PC-9 (cell line): ENCODE measurements at regions of chr9 and their contacts with region 1.

Region 1: GRCh38 chr9:127980706-127981558 is at the start of gene EEIG1:
- DNase-seq: peak; percentile 73 to 99
- H3K4me3 ChIP-seq: peak within 1 kb of the TSS; percentile 82
- H3K27ac ChIP-seq: peak within 1 kb of the TSS; percentile 39
- H3K4me1 ChIP-seq: peaks cover 45% of the 10 kb centered on the region
- H3K27me3 ChIP-seq: no peaks in the 10 kb centered on the region
- CTCF ChIP-seq: no peak
- total RNA-seq, gene EEIG1: 176 and 208 TPM in 2 replicates

Region 2: GRCh38 chr9:127943731-127944144 is 37.2 kb before region 1 on chr9:
- CTCF ChIA-PET with region 1: interaction called, 4 read pairs
- POLR2A ChIA-PET with region 1: no interaction called
- intact Hi-C with region 1: loop called (anchors 1 kb)
- DNase-seq: peak; percentile 61 to 80
- H3K4me3 ChIP-seq: no peak overlapping the region
- H3K27ac ChIP-seq: no peak overlapping the region
- H3K4me1 ChIP-seq: no peaks in the 10 kb centered on the region
- H3K27me3 ChIP-seq: no peaks in the 10 kb centered on the region
- CTCF ChIP-seq: peak; percentile 88

Region 3: DNA sequence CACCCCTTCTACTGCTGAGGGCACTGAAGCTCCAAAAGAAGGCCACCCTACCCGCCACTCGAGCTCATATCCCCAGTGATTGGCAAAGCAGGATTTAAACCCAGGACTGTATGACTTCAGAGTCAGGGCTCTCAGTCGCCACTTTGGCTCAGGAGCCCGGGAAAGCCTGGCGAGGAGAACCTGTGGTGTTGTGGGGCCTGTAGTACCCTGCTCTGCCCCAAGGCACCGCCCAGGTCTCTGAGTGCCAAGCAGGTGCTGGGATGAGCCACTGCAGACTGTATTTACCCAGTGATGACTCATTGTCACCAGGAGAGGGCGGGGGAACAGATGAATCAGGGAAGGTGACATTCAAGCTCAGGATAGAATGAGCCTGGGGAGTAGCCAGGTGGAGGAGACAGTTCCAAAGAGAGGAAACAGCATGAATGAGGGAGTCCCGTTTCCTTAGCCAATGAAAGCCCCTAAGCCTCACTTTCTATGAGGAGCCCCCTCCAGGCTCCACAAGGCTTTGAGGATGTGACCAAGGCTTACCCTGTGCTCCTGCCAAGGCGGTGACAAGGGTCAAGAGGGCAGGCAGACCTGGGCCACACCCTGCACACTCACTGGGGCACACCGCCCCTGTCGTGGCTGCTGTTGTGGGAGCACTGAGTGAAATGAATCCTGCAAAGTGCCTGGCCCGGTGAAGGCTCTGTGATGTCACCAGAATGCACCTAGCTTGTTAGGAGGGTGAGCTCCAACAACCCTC is 25.5 kb before region 1 on chr9:
- CTCF ChIA-PET with region 1: interaction called, 3 read pairs
- POLR2A ChIA-PET with region 1: interaction called, 5 read pairs
- intact Hi-C with region 1: loop called (anchors 1 kb)
- DNase-seq: peak; percentile 96 to 97
- H3K4me3 ChIP-seq: peak overlapping the region; percentile 10; the same call in 1 of the 2 replicates
- H3K27ac ChIP-seq: peak overlapping the region; percentile 82
- H3K4me1 ChIP-seq: peaks cover 60% of the 10 kb centered on the region
- H3K27me3 ChIP-seq: no peaks in the 10 kb centered on the region
- CTCF ChIP-seq: peak; percentile 68

Region 4: DNA sequence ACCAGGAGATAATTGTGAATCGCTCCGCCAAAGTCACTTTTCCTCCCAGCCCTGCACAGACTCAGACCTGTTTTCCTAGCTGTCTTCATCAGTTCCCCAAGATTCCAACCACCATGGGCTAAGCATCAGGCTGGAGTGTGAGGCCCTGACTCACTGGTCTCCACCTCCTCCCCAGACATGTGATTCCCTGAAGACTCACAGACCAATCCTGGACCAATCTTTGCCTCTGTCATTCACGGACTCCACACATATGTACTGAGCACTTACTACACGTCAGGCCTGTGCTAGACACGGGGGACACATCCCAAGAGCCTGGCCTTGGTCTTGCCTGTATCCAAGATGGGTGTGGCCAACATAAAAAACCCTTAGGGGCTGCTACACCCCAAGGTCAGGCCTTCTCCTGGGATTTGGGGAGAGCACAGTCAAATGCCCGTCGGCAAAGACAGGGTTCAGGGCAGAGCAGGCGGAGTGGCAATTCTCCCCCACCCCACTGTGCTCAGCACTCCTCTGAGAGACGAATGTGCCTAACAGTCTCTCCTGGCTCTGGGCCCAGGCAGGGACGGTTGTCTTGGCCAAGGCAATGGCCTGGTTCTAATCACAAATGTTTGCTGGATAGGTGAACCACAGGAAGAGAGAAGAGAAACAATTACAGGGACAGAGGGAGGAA is 12.1 kb before region 1 on chr9:
- CTCF ChIA-PET with region 1: no interaction called
- POLR2A ChIA-PET with region 1: interaction called, 14 read pairs
- intact Hi-C with region 1: loop called (anchors 1 kb)
- DNase-seq: peak; percentile 66 to 72
- H3K4me3 ChIP-seq: no peak overlapping the region
- H3K27ac ChIP-seq: peak overlapping the region; percentile 81
- H3K4me1 ChIP-seq: peaks cover 96% of the 10 kb centered on the region
- H3K27me3 ChIP-seq: no peaks in the 10 kb centered on the region
- CTCF ChIP-seq: no peak

Region 5: DNA sequence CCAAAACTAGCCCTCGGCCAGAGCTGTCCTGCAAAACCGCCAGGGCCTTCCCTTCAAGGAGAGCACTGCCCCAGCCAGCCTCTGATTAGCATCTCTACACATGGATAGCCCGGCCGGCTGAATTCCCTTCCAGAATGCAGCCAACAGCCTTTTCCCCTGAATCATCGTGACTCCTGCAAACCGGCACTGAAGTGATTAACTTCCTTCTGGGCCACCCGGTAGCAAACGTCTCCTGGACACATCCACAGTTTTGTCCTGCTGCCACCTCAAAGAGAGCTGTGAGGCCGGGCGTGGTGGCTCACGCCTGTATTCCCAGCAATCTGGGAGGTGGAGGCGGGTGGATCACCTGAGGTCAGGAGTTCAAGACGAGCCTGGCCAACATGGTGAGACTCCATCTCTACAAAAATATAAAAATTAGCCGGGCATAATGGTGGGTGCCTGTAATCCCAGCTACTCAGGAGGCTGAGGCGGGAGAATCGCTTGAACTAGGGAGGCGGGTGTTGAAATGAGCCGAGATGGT is 20.9 kb after region 1 on chr9:
- CTCF ChIA-PET with region 1: interaction called, 13 read pairs
- POLR2A ChIA-PET with region 1: interaction called, 5 read pairs
- intact Hi-C with region 1: loop called (anchors 1 kb)
- DNase-seq: peak; percentile 95 to 97
- H3K4me3 ChIP-seq: peak overlapping the region; percentile 33; the same call in 1 of the 2 replicates
- H3K27ac ChIP-seq: peak overlapping the region; percentile 99
- H3K4me1 ChIP-seq: peaks cover 67% of the 10 kb centered on the region
- H3K27me3 ChIP-seq: no peaks in the 10 kb centered on the region
- CTCF ChIP-seq: no peak

Region 6: DNA sequence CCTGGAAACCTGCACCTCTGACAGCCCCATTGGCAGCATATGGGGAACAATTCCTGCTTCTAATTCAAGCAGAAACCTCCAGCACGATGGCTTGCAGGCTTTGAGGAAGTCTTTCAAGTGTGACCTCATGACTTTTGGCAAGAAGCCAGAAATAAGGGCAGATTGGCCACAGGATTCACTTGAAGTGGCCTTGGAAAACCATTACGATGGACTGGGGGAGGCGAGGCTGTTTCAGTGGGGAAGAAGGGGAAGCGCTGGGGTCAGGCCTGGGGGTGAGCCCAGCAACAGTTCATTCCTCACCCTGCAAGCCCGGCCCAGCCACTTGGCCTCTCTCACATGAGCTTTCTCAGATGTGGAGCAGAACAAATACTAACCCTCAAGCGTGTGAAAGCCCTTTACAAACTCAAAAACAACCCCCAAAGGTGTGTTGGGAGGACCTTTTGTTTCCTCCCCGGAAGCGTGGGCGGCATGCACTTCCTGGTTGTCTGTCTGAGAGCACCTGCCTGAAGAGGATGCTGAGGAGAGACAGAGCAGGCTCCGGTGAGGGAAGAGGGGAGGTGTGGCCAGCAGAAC is 26.7 kb after region 1 on chr9:
- CTCF ChIA-PET with region 1: interaction called, 13 read pairs
- POLR2A ChIA-PET with region 1: interaction called, 4 read pairs
- intact Hi-C with region 1: loop called (anchors 2 kb)
- DNase-seq: peak; percentile 82 to 98
- H3K4me3 ChIP-seq: no peak overlapping the region
- H3K27ac ChIP-seq: peak overlapping the region; percentile 96
- H3K4me1 ChIP-seq: peaks cover 57% of the 10 kb centered on the region
- H3K27me3 ChIP-seq: no peaks in the 10 kb centered on the region
- CTCF ChIP-seq: no peak

Region 7: DNA sequence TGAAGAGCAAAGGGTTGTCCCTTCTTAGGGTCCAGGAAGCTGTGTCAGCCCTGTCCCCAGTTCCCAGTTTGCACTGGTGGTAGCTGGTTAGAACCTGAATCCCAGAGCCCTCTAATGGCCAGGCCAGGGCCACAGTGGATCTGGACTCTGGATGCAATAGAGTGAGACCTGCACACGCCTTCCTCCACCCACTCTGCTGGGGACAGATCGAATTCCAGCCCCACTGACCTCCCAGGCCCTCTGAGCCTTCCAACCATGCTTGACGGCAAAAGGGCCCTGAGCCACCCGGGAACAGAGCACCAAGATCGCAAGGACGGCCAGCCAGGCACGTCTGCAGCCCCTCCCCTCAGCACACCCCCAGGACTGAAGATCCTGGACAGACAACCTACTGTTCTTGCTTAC is 62.5 kb after region 1 on chr9:
- CTCF ChIA-PET with region 1: interaction called, 10 read pairs
- POLR2A ChIA-PET with region 1: interaction called, 3 read pairs
- intact Hi-C with region 1: no loop called
- DNase-seq: no peak
- H3K4me3 ChIP-seq: no peak overlapping the region
- H3K27ac ChIP-seq: no peak overlapping the region
- H3K4me1 ChIP-seq: peaks cover 5% of the 10 kb centered on the region; the same call in 1 of the 2 replicates
- H3K27me3 ChIP-seq: no peaks in the 10 kb centered on the region
- CTCF ChIP-seq: no peak